ENCODE measurements at regions of chr12 and their contacts with region 1.

Region 1: GRCh38 chr12:93785262-93786010 is 108.3 kb downstream of the CRADD start:
- DNase-seq: peak; percentile 77
- H3K4me3 Mint-ChIP-seq: no peak overlapping the region
- H3K27ac Mint-ChIP-seq: peak overlapping the region; percentile 89
- H3K4me1 Mint-ChIP-seq: peaks cover 72% of the 10 kb centered on the region
- H3K27me3 Mint-ChIP-seq: no peaks in the 10 kb centered on the region

Region 2: GRCh38 chr12:92928962-92929915 is 856.2 kb before region 1 on chr12 and contains the start of gene EEA1:
- CTCF ChIA-PET with region 1: no interaction called
- intact Hi-C with region 1: loop called (anchors 1 kb)
- DNase-seq: peak; percentile 97
- H3K4me3 Mint-ChIP-seq: peak within 1 kb of the TSS; percentile 90
- H3K27ac Mint-ChIP-seq: peak within 1 kb of the TSS; percentile 93
- H3K4me1 Mint-ChIP-seq: peaks cover 28% of the 10 kb centered on the region
- H3K27me3 Mint-ChIP-seq: no peaks in the 10 kb centered on the region
- total RNA-seq, gene EEA1: 15.6 to 17.6 TPM

Region 3: GRCh38 chr12:93378373-93379325 is 406.8 kb before region 1 on chr12:
- CTCF ChIA-PET with region 1: no interaction called
- intact Hi-C with region 1: loop called (anchors 5 kb)
- DNase-seq: peak; percentile 74
- H3K4me3 Mint-ChIP-seq: peak overlapping the region; percentile 99
- H3K27ac Mint-ChIP-seq: peak overlapping the region; percentile 99
- H3K4me1 Mint-ChIP-seq: peaks cover 38% of the 10 kb centered on the region
- H3K27me3 Mint-ChIP-seq: no peaks in the 10 kb centered on the region

Region 4: GRCh38 chr12:93677195-93678064 is 108.0 kb before region 1 on chr12 and contains the start of gene CRADD:
- CTCF ChIA-PET with region 1: interaction called, 3 read pairs
- intact Hi-C with region 1: loop called (anchors 1 kb)
- DNase-seq: peak; percentile 92
- H3K4me3 Mint-ChIP-seq: peak within 1 kb of the TSS; percentile 89
- H3K27ac Mint-ChIP-seq: peak within 1 kb of the TSS; percentile 99
- H3K4me1 Mint-ChIP-seq: peaks cover 40% of the 10 kb centered on the region
- H3K27me3 Mint-ChIP-seq: peaks cover 9% of the 10 kb centered on the region
- total RNA-seq, gene CRADD: 14.3 to 15.6 TPM

Region 5: GRCh38 chr12:93722835-93723538 is 62.4 kb before region 1 on chr12:
- CTCF ChIA-PET with region 1: no interaction called
- intact Hi-C with region 1: no loop called
- DNase-seq: no peak
- H3K4me3 Mint-ChIP-seq: no peak overlapping the region
- H3K27ac Mint-ChIP-seq: no peak overlapping the region
- H3K4me1 Mint-ChIP-seq: peaks cover 10% of the 10 kb centered on the region
- H3K27me3 Mint-ChIP-seq: no peaks in the 10 kb centered on the region

Region 6: DNA sequence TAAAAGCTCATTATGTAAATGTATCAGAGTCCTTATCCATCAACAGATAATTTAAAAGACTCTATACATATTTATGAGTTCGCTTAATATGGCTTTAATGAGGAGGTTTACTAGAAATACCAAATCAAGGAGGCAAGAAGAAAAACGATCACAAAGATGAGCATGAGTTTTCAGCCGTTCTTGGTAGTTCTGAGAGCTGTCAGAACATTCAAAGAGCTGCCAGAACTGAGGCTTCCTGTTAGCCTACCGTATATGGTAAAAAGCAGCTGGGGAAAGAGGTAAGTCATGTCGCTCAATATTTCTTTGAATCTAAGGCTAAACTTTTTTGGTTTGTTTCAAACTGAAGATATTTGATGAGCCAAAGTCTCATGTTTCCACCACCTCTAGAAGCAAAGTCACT is 247.7 kb after region 1 on chr12:
- CTCF ChIA-PET with region 1: interaction called, 5 read pairs
- intact Hi-C with region 1: loop called (anchors 5 kb)
- DNase-seq: peak; percentile 22
- H3K4me3 Mint-ChIP-seq: no peak overlapping the region
- H3K27ac Mint-ChIP-seq: peak overlapping the region; percentile 50
- H3K4me1 Mint-ChIP-seq: peaks cover 40% of the 10 kb centered on the region
- H3K27me3 Mint-ChIP-seq: no peaks in the 10 kb centered on the region

Region 7: DNA sequence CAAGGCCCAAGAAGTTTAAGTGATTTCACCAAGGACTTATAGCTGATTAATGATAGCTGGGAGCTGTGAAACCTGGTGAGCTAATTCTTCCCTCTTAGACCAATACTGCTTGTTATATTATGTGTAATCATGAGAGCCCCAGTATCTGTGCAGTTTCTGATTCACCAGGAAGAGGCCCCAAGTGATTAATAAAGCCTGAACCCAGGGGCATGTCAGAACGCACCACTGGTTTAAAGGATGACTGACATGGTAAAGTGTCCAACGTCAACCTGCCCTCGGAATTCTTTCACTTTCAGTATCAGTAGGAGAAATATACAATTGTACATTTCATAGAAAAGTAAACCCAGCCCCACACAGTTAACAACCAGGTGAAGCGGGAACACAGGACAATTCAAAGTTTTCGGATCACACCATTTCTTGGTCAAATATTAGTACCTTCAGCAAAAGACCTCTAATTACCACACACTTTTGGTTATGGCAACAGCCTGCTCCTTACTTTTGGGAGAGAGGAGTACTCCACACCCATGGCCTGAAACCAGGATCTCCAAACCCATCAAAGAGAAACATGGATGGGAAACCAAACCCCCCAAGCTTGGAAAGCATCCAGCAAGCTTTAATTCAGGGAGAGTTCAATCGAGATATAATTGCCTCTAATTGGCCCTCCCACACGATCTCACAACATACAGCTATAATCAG is 836.4 kb after region 1 on chr12:
- CTCF ChIA-PET with region 1: no interaction called
- intact Hi-C with region 1: loop called (anchors 5 kb)
- DNase-seq: peak; percentile 66
- H3K4me3 Mint-ChIP-seq: no peak overlapping the region
- H3K27ac Mint-ChIP-seq: no peak overlapping the region
- H3K4me1 Mint-ChIP-seq: peaks cover 20% of the 10 kb centered on the region
- H3K27me3 Mint-ChIP-seq: no peaks in the 10 kb centered on the region

Measured in activated naive CD4-positive, alpha-beta T cell treated with anti-CD3 and anti-CD28 coated beads for 36 hours (primary cell).